Activated B cell treated with CpG ODN at 0.5 μM for 24 hours (primary cell): ENCODE measurements at regions of chr3 and their contacts with region 1.

Region 1: DNA sequence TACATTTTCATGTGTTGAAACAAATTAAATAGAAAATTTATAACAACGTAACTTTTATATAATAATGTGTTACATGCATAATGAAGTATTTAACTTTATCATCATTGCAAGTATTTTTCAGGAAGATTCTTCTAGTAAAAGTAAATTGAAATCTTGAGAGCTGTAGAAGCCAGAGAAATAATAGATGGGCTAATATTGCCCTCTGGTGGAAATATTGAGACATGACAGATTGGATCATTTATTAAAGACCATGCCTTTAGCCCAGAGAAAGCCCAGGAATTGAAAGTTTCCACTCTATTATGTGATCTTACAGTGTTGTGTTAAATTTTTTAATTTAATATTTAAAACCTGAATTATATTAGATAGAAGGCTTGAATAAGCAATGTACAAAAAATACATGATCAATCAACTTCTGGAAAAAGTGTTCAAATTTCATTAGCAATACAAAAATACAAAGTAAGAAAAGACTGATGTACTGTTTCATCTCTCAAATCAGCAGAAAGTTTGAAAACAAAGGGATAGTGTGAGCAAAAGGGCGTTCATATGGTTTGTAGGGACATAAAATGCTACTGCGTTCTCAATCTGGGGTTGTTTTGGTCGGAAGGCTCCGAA is 52.7 kb upstream of the SPTSSB start:
- DNase-seq: no peak
- ATAC-seq: no peak
- H3K4me3 Mint-ChIP-seq: no peak overlapping the region
- H3K27ac Mint-ChIP-seq: no peak overlapping the region
- H3K4me1 Mint-ChIP-seq: no peaks in the 10 kb centered on the region
- H3K27me3 Mint-ChIP-seq: no peaks in the 10 kb centered on the region
- CTCF ChIP-seq: peak; percentile 42

Region 2: GRCh38 chr3:160686955-160687535 is 737.0 kb before region 1 on chr3:
- CTCF ChIA-PET with region 1: interaction called, 3 read pairs
- POLR2A ChIA-PET with region 1: no interaction called
- intact Hi-C with region 1: loop called (anchors 1 kb)
- DNase-seq: no peak
- ATAC-seq: no peak
- H3K4me3 Mint-ChIP-seq: no peak overlapping the region
- H3K27ac Mint-ChIP-seq: no peak overlapping the region
- H3K4me1 Mint-ChIP-seq: no peaks in the 10 kb centered on the region
- H3K27me3 Mint-ChIP-seq: no peaks in the 10 kb centered on the region
- CTCF ChIP-seq: no peak

Region 3: DNA sequence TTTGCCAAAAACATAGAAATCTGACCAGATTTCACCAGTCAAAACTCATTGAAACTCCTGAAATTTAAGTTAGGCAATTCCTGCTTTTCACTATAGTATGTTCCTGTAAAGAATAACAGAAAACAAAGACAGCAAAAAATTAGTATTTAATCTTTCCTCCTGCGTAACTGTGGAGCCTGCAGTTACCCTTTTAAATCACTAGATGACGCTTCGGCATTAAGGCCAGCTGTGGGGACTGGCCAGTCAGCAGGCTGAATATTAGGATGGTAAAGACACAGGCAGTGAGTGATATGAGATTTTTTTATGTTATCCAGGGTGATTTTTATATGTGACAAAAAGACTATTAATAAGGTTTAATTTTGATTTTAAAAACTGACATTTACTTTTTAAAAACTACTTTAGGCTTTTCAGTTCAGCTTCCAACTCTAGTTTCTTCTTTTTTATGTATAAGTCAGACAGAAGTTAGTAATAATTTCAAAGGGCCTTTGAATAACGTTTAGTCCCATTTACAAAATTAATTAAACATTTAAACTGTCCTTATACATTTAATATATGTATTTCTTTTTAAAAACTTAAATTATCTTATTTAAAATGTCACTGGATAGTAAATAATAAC is 502.9 kb before region 1 on chr3:
- CTCF ChIA-PET with region 1: no interaction called
- POLR2A ChIA-PET with region 1: no interaction called
- intact Hi-C with region 1: loop called (anchors 1 kb)
- DNase-seq: no peak
- ATAC-seq: no peak
- H3K4me3 Mint-ChIP-seq: no peak overlapping the region
- H3K27ac Mint-ChIP-seq: no peak overlapping the region
- H3K4me1 Mint-ChIP-seq: no peaks in the 10 kb centered on the region
- H3K27me3 Mint-ChIP-seq: no peaks in the 10 kb centered on the region
- CTCF ChIP-seq: no peak

Region 4: DNA sequence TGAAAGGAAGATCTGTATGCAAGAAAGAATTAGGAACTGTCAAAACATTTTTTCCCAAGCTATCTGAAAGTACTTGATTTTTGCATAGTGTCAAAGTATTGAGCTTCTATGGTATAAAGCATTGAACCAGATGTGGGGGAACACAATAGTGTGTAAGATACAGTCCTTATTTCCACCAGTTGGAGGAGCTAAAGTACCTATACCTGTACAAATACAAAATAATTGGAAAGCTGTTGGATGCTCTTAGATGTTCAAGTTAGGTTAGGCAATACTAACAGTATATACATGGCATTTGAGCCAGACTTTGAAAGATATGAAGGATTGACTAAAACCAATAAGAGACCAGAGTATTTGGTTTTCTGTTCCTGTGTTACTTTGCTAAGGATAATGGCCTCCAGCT is 467.2 kb before region 1 on chr3:
- CTCF ChIA-PET with region 1: interaction called, 9 read pairs
- POLR2A ChIA-PET with region 1: no interaction called
- intact Hi-C with region 1: loop called (anchors 1 kb)
- DNase-seq: no peak
- ATAC-seq: peak; percentile 54
- H3K4me3 Mint-ChIP-seq: no peak overlapping the region
- H3K27ac Mint-ChIP-seq: no peak overlapping the region
- H3K4me1 Mint-ChIP-seq: no peaks in the 10 kb centered on the region
- H3K27me3 Mint-ChIP-seq: peaks cover 2% of the 10 kb centered on the region
- CTCF ChIP-seq: no peak

Region 5: DNA sequence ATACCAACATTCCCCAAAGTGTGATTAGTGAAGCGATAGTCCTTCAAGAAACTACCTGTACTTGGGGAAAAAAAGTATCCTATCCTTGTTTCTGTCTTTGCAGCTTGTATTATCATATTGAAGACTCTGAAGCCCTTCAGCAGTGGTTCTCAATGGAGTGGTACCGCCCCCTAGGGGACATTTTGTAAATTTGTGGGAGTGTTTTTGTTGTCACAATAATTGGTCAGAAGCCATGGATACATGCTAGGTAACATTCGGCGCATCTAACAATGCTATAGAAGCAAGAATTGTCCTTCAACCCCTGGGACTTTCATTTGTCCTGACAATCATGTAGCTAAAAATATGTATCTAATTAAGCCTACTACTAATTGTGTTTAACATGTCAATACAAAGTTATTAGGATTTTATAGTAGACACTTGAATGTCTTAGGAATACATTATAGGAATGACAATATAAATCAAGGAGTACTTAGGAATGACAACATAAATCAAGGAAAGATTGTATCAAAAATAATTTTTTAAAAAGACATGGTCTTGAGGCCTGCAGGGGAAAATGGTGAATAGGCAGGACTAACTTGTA is 149.2 kb before region 1 on chr3:
- CTCF ChIA-PET with region 1: interaction called, 15 read pairs
- POLR2A ChIA-PET with region 1: no interaction called
- intact Hi-C with region 1: loop called (anchors 1 kb)
- DNase-seq: no peak
- ATAC-seq: no peak
- H3K4me3 Mint-ChIP-seq: no peak overlapping the region
- H3K27ac Mint-ChIP-seq: no peak overlapping the region
- H3K4me1 Mint-ChIP-seq: no peaks in the 10 kb centered on the region
- H3K27me3 Mint-ChIP-seq: no peaks in the 10 kb centered on the region
- CTCF ChIP-seq: no peak

Region 6: DNA sequence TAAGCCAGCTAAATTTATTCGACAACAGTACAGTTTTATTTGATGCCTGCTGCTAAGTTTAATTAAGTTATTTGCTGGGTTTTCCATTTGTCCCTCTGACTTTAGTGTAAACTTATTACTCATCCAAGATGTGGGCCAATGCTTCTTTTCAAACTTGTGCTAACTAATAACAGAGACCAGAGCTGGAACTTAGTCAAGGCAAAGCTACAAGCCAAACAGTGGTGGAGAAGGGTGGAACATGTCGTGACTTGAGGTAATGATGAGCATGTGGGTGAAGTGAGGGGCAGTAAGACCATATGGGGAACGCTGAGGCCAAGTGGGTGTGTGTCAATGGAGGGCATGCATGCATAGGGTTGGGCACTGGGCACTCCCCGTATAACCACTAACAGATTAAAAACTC is 139.0 kb before region 1 on chr3:
- CTCF ChIA-PET with region 1: no interaction called
- POLR2A ChIA-PET with region 1: no interaction called
- intact Hi-C with region 1: no loop called
- DNase-seq: no peak
- ATAC-seq: no peak
- H3K4me3 Mint-ChIP-seq: no peak overlapping the region
- H3K27ac Mint-ChIP-seq: no peak overlapping the region
- H3K4me1 Mint-ChIP-seq: no peaks in the 10 kb centered on the region
- H3K27me3 Mint-ChIP-seq: no peaks in the 10 kb centered on the region
- CTCF ChIP-seq: no peak